Aorta (tissue), 5 donors: ENCODE measurements at regions of chr12 and their contacts with region 1.

Region 1: DNA sequence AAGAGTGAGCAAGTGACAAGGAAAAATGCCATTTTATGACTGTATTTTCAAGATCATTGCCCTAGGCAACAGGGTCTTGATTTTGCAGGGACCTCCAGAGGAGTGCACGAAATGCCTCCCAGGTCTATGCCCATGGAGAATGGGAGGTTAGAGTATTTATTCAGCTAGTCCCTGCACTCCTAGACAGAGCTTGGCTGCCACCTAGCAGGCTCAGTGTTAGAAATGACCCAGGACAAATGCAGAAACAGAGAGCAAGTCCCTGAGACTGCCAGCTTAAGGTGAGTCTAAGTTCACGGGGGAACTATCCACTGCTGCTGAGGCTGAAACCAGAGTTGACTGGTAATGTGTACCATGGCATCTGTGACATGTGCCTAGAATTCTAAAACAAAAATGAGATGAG is 506.4 kb downstream of the MED13L start:
- DNase-seq: no peak
- ATAC-seq: no peak
- H3K4me3 ChIP-seq: no peak overlapping the region
- H3K27ac ChIP-seq: no peak overlapping the region
- H3K4me1 ChIP-seq: no peaks in the 10 kb centered on the region
- H3K27me3 ChIP-seq: peaks cover 0 to 1% of the 10 kb centered on the region in 2 donors

Region 2: GRCh38 chr12:114812858-114813761 is 958.0 kb before region 1 on chr12:
- intact Hi-C with region 1: loop called in 1 of 2 experiments (anchors 10 kb)
- DNase-seq: no peak
- ATAC-seq: no peak
- H3K4me3 ChIP-seq: no peak overlapping the region
- H3K27ac ChIP-seq: no peak overlapping the region
- H3K4me1 ChIP-seq: peaks cover 0 to 2% of the 10 kb centered on the region in 2 donors
- H3K27me3 ChIP-seq: no peaks in the 10 kb centered on the region